Heart right ventricle (tissue), 16 donors: ENCODE measurements at regions of chr4 and their contacts with region 1.

Region 1: GRCh38 chr4:54228056-54228527 is 1.0 kb upstream of the PDGFRA start:
- DNase-seq: peak; percentile 75 to 79
- ATAC-seq: peak; percentile 61 to 81 (median 68)
- H3K4me3 ChIP-seq: peak overlapping the region; percentile 4 to 64 (median 54)
- H3K27ac ChIP-seq: peak overlapping the region; percentile 6 to 85 (median 68)
- H3K4me1 ChIP-seq: peaks cover 5 to 74% (median 62%) of the 10 kb centered on the region in 9 donors
- H3K27me3 ChIP-seq: peaks cover 20 to 100% (median 98%) of the 10 kb centered on the region in 7 donors
- CTCF ChIP-seq: peak; percentile 49 to 87 (median 71)

Region 2: DNA sequence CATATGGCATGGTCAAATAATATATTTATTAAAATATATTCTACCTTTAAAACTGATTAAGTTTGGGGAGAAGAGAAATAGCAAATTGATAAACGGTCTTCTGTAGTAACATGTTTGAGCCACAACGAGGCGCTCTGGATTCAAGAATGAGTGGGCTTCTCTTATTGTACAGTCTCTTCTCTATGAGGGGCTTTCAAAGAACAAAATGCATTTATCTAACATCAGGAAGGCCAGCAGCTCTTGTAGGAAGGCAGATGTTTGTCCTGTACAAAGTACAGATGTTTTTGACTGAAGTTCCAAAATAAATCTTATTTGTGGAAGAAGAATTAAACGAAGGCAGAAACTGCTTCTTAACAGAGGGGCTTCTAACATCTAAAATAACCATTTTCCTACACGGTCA is 1212.4 kb before region 1 on chr4:
- intact Hi-C with region 1: loop called (anchors 5 to 10 kb)
- DNase-seq: peak in 1 of 2 donors; percentile 38
- ATAC-seq: peak in 1 of 8 donors; percentile 29
- H3K4me3 ChIP-seq: no peak overlapping the region
- H3K27ac ChIP-seq: no peak overlapping the region
- H3K4me1 ChIP-seq: peaks cover 6 to 70% (median 55%) of the 10 kb centered on the region in 9 donors
- H3K27me3 ChIP-seq: no peaks in the 10 kb centered on the region
- CTCF ChIP-seq: peak; percentile 35 to 80 (median 66)

Region 3: DNA sequence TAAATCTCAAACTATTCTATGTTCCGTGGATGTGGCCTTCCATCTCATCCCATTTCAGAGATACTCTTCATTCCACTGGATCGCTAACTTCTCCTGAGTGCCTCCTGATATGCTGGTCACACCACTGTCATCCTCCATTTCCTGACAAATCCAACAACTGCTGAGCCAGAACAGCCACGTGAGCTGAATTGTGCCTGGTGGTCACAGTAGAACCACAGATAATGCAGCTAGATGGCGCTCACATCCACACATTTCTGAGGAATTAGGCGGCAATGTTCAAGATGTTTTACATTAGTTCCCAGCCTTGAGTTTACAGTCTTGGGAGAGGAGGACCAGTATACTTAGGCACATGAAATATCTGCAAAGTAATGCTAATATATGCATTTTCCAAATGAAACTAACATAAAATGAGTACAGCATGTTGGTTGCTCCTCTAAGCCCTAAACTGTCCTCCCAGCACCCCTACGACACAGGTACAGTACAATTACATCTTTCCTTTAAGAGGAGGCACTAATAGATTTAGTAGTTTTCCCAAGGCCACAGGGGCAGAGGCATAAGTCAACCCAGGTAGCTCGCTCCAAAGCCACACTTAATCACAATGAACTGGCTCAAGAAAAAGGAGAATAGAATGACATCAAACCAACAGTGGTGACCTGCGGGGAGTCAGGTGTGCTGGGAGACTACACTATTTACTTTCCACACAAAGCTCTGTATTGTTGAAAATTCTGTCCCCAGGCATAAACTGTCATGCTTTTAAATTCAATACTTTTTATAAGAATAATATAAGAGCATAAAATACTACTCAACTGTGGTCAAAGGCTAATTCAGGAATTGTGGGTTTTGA is 297.9 kb before region 1 on chr4:
- intact Hi-C with region 1: loop called in 2 of 10 experiments (anchors 5 kb)
- DNase-seq: peak; percentile 20 to 82
- ATAC-seq: peak; percentile 72 to 94 (median 92)
- H3K4me3 ChIP-seq: no peak overlapping the region
- H3K27ac ChIP-seq: peak overlapping the region in 1 of 10 donors; percentile 12
- H3K4me1 ChIP-seq: peaks cover 0 to 11% (median 0%) of the 10 kb centered on the region in 9 donors
- H3K27me3 ChIP-seq: peaks cover 0 to 11% (median 2%) of the 10 kb centered on the region in 7 donors
- CTCF ChIP-seq: peak; percentile 54 to 85 (median 78)